ENCODE measurements at regions of chr10 and their contacts with region 1.

Region 1: GRCh38 chr10:22010973-22011408 is 7.5 kb upstream of the DNAJC1 start:
- DNase-seq: no peak
- ATAC-seq: no peak
- H3K4me3 Mint-ChIP-seq: no peak overlapping the region
- H3K27ac Mint-ChIP-seq: no peak overlapping the region
- H3K4me1 Mint-ChIP-seq: no peaks in the 10 kb centered on the region
- H3K27me3 Mint-ChIP-seq: peaks cover 2% of the 10 kb centered on the region
- CTCF ChIP-seq: peak; percentile 69

Region 2: DNA sequence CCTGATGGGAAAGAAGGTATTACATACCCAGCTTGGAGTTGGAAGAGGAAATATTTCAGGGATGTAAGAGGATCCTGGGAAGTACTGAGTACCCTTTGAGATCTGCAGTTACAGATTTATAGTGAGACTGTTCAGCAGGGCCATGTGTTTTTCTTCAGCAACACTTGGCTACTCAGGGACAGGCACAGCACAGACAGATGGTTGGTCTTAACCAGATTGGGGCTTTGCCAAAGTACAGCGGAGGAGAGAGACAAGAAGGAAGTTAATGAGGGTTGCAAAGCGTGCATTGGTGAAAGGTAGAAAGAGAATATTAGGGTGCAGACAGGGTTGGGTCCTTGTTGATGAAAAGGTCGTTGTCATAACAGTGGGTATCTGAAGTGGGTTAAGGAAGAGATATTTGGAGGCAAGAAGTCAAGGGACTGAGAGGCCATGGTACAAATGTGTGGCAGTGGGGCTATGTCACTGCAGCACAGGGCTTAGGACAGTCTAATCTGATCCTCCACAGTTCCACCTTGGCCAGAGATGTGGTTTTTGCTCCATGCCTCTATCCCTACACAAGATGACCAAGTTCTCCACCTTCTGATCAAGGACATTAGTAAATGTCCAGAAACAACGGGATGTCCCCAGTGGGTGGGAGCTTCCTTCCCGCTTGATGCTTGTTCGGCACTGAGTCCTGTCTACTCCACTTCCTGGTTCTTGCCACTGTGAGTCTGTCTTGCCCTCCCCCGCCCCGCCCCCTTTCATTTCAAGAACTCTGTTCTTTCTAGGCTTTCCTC is 11.5 kb after region 1 on chr10:
- CTCF ChIA-PET with region 1: interaction called, 12 read pairs
- POLR2A ChIA-PET with region 1: no interaction called
- intact Hi-C with region 1: no loop called
- DNase-seq: peak; percentile 69
- ATAC-seq: peak; percentile 91
- H3K4me3 Mint-ChIP-seq: peak overlapping the region; percentile 34
- H3K27ac Mint-ChIP-seq: peak overlapping the region; percentile 84
- H3K4me1 Mint-ChIP-seq: peaks cover 19% of the 10 kb centered on the region
- H3K27me3 Mint-ChIP-seq: no peaks in the 10 kb centered on the region
- CTCF ChIP-seq: no peak

Region 3: GRCh38 chr10:22042557-22043326 is 31.8 kb after region 1 on chr10:
- CTCF ChIA-PET with region 1: no interaction called
- POLR2A ChIA-PET with region 1: no interaction called
- intact Hi-C with region 1: no loop called
- DNase-seq: no peak
- ATAC-seq: no peak
- H3K4me3 Mint-ChIP-seq: no peak overlapping the region
- H3K27ac Mint-ChIP-seq: no peak overlapping the region
- H3K4me1 Mint-ChIP-seq: no peaks in the 10 kb centered on the region
- H3K27me3 Mint-ChIP-seq: peaks cover 32% of the 10 kb centered on the region
- CTCF ChIP-seq: no peak

Measured in activated CD8-positive, alpha-beta T cell treated with anti-CD3 and anti-CD28 coated beads for 36 hours (primary cell).